WTC11 (cell line): ENCODE measurements at regions of chr5 and their contacts with region 1.

Region 1: GRCh38 chr5:147188200-147189108 is 46.4 kb upstream of the STK32A start:
- DNase-seq: peak; percentile 37
- ATAC-seq: peak; percentile 70
- H3K4me3 Mint-ChIP-seq: no peak overlapping the region
- H3K27ac Mint-ChIP-seq: no peak overlapping the region
- H3K4me1 Mint-ChIP-seq: peaks cover 34% of the 10 kb centered on the region
- H3K27me3 Mint-ChIP-seq: no peaks in the 10 kb centered on the region; the same call in 1 of the 2 replicates
- CTCF ChIP-seq: peak; percentile 87

Region 2: GRCh38 chr5:146533260-146533857 is 655.1 kb before region 1 on chr5:
- CTCF ChIA-PET with region 1: interaction called, 45 read pairs
- POLR2A ChIA-PET with region 1: no interaction called
- DNase-seq: peak; percentile 84
- ATAC-seq: peak; percentile 90
- H3K4me3 Mint-ChIP-seq: 0 out of 2 replicates have a peak overlapping the region, but pooled peaks have one; percentile 33
- H3K27ac Mint-ChIP-seq: no peak overlapping the region; the same call in 1 of the 2 replicates
- H3K4me1 Mint-ChIP-seq: peaks cover 15% of the 10 kb centered on the region
- H3K27me3 Mint-ChIP-seq: no peaks in the 10 kb centered on the region; the same call in 1 of the 2 replicates
- CTCF ChIP-seq: peak; percentile 71

Region 3: DNA sequence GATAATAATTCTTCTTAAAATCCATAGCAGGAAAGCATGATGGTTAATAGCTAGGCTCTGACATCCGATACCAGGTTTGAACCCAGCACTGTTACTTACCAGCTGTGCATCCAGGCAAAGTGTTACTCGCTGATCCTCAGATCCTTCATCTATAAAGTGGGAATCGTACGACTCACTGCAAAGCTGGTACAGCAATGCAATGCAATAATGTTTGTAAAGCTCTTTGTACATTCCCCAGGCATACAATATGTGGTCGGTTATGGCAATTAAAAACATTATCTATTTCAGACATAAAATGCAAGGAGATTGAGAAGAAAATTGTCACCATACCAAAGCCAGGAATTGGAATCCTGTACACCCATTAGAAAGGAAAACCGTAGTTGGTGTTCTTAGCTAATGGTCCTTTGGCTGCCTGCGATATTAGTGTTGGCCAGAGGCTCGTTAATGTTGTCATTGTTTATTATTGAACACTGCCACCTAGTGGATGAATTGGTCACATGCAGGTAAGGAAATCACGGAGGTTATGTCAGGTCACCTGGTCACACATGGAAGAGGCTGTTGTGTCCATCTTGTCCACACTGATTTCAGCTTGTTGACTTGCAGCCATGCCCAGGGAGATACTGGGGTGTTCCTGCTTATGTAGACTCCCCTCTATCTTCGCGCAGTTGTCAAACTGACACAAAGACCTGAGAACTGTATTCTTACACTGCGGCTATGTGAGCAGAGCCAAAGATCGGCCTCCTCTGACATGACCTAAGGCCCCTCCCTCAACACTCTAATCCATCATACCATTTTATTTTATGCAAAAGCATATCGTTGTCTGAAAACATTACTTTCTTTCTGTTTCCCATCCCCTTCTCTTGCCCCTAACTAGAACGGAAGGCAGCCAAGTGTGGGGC is 222.4 kb before region 1 on chr5:
- CTCF ChIA-PET with region 1: interaction called, 48 read pairs
- POLR2A ChIA-PET with region 1: no interaction called
- DNase-seq: peak; percentile 54
- ATAC-seq: peak; percentile 95
- H3K4me3 Mint-ChIP-seq: no peak overlapping the region
- H3K27ac Mint-ChIP-seq: no peak overlapping the region
- H3K4me1 Mint-ChIP-seq: peaks cover 4% of the 10 kb centered on the region
- H3K27me3 Mint-ChIP-seq: no peaks in the 10 kb centered on the region
- CTCF ChIP-seq: peak; percentile 74

Region 4: DNA sequence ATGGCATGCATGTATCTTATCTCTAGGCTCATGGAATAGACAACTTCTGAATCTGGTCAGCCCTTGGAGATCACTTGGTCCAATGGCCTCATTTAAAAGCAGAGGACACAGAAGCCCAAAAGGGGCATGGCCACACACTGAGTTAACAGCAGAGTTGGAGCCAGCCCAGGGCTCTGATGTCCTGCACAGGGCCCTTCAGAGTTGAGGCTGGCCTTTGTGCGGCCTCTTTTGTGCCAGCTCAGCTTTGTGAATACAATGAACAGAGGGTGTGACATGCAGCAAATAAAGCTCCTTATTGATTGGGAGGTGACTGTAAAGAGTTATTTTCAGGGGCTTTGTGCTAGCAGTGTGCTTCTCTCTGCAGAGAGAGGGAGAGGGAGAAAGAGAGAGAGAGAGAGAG is 103.8 kb before region 1 on chr5:
- CTCF ChIA-PET with region 1: interaction called, 10 read pairs
- POLR2A ChIA-PET with region 1: no interaction called
- DNase-seq: no peak
- ATAC-seq: no peak
- H3K4me3 Mint-ChIP-seq: no peak overlapping the region
- H3K27ac Mint-ChIP-seq: no peak overlapping the region
- H3K4me1 Mint-ChIP-seq: 0 out of 2 replicates have a peak, but pooled peaks cover 3% of the 10 kb centered on the region
- H3K27me3 Mint-ChIP-seq: no peaks in the 10 kb centered on the region
- CTCF ChIP-seq: no peak

Region 5: DNA sequence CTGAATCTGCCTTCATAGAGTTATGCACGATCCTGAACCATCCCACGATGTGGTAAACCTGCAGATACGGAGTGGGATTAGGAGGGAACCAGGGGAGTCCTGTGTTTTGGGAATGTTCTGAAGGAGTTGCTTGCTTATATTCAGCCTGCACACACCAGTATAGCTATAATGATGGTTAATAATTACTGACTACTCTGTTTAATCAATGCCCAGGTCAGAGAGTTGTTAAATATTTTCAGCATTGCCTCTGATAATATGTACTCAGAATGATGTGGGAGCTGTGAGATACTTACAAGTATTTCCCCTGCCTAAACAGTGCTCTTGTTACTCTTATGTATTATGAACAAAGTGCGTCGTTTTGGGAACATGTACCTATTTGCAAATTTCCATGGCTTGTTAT is 11.5 kb after region 1 on chr5:
- CTCF ChIA-PET with region 1: interaction called, 15 read pairs
- POLR2A ChIA-PET with region 1: interaction called, 3 read pairs
- DNase-seq: no peak
- ATAC-seq: no peak
- H3K4me3 Mint-ChIP-seq: no peak overlapping the region
- H3K27ac Mint-ChIP-seq: no peak overlapping the region
- H3K4me1 Mint-ChIP-seq: no peaks in the 10 kb centered on the region
- H3K27me3 Mint-ChIP-seq: no peaks in the 10 kb centered on the region
- CTCF ChIP-seq: no peak

Region 6: DNA sequence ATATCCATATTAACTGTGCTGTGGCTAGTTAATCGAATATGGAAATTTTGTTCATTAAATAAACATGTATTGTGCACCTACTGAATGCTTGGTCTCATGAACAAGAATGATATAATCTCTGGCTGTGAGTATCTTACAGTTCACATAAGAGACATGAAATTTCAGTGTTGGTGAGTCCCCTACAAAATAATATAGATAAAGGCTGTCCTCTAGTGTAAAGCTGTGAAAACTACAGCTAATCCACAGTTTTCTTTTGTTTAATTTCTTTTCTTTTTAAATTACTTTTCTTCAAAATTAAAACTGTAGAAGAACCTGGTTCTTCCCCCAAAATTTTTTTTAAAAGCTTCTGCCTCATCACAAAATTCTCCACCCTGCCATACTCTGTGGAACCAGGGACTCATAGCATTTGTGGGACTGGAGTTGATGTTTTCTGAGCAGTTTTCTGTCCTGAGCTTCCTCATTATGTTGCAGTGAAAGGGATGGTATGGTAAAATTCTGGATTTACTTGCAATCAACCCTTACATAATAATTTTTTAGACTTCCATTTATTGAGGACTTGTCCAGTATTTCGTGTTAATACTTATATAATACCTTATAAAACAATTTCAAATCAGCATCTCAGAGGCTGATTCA is 181.4 kb after region 1 on chr5:
- CTCF ChIA-PET with region 1: interaction called, 40 read pairs
- POLR2A ChIA-PET with region 1: no interaction called
- DNase-seq: no peak
- ATAC-seq: peak; percentile 71
- H3K4me3 Mint-ChIP-seq: no peak overlapping the region
- H3K27ac Mint-ChIP-seq: no peak overlapping the region
- H3K4me1 Mint-ChIP-seq: peaks cover 6% of the 10 kb centered on the region
- H3K27me3 Mint-ChIP-seq: no peaks in the 10 kb centered on the region
- CTCF ChIP-seq: peak; percentile 31; the same call in 1 of the 2 replicates